ENCODE measurements at regions of chr6 and their contacts with region 1.

Region 1: DNA sequence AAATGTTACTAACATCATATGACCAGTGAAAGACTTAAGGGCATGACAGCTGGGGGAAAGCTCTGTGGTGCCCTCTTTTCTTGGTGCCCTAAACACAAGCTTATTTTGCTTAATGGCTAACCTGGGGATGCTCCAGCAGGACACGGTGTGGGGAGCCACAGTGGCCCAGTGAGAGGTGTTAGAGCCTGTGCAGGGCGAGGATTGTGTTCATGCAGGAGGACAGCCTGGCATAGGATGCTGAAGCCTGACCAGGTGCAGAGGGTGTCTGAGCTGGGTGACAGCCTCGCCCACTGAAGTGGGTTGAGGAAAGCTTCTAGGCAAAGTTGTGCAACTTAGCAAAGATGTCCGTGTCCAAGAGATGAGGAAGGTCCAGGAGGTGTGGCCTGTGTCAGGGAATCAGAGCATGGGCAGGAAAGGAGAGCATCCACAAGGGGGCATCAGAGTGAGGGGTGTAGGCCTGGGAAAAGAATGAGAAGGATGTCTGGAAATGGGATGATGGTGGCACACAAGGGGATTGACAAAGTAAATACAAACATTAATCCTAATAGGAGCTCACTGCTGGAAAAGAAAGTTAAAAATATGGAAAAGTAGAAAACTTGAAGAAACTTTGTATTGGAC is 33.9 kb downstream of the SLC17A4 start:
- DNase-seq: peak; percentile 39
- H3K4me3 ChIP-seq: no peak overlapping the region
- H3K27ac ChIP-seq: no peak overlapping the region
- H3K4me1 ChIP-seq: no peaks in the 10 kb centered on the region
- H3K27me3 ChIP-seq: no peaks in the 10 kb centered on the region
- CTCF ChIP-seq: peak; percentile 70 to 77

Region 2: GRCh38 chr6:25746968-25747367 is 41.4 kb before region 1 on chr6:
- CTCF ChIA-PET with region 1: no interaction called
- dilution Hi-C with region 1: no loop called
- in situ Hi-C with region 1: no loop called
- intact Hi-C with region 1: no loop called
- DNase-seq: no peak
- H3K4me3 ChIP-seq: no peak overlapping the region
- H3K27ac ChIP-seq: no peak overlapping the region
- H3K4me1 ChIP-seq: no peaks in the 10 kb centered on the region
- H3K27me3 ChIP-seq: no peaks in the 10 kb centered on the region
- CTCF ChIP-seq: no peak

Region 3: GRCh38 chr6:25757936-25758642 is 30.3 kb before region 1 on chr6:
- CTCF ChIA-PET with region 1: no interaction called
- dilution Hi-C with region 1: no loop called
- in situ Hi-C with region 1: no loop called
- intact Hi-C with region 1: no loop called
- DNase-seq: no peak
- H3K4me3 ChIP-seq: no peak overlapping the region
- H3K27ac ChIP-seq: no peak overlapping the region
- H3K4me1 ChIP-seq: no peaks in the 10 kb centered on the region
- H3K27me3 ChIP-seq: no peaks in the 10 kb centered on the region
- CTCF ChIP-seq: no peak

Region 4: GRCh38 chr6:25942561-25943147 is 154.2 kb after region 1 on chr6:
- CTCF ChIA-PET with region 1: no interaction called
- dilution Hi-C with region 1: no loop called
- in situ Hi-C with region 1: no loop called
- intact Hi-C with region 1: loop called (anchors 1 kb)
- DNase-seq: peak; percentile 35
- H3K4me3 ChIP-seq: no peak overlapping the region
- H3K27ac ChIP-seq: no peak overlapping the region
- H3K4me1 ChIP-seq: no peaks in the 10 kb centered on the region
- H3K27me3 ChIP-seq: no peaks in the 10 kb centered on the region
- CTCF ChIP-seq: peak; percentile 47 to 55

Region 5: DNA sequence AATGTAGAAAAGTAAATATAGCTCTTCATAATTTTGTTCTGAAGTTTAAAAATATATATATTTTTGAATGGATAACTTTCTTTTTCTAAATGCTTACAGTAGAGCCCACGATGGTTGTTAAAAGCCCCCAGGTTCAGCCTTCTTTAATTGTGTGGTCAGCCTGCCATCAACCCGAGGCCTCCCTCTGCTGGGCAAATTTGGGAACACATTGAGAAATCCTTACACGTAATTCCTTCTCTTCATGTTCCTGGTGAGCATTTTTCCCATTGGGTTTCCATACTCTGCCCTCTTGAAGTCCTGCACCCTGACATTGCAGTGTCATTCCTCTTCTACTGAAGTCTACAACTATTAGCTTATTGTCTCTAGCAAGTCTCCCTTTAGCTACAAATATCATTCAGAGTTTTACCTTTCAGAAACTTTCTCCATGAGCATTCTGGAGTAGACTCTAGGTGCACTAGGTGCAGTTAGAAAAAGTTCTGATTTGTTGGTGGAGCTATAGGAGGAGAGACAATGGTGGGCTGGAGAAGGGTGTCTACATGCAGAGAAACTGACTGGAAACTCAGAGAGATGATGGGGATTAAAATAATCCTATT is 214.8 kb after region 1 on chr6:
- CTCF ChIA-PET with region 1: interaction called, 3 read pairs
- dilution Hi-C with region 1: loop called (anchors 10 kb)
- in situ Hi-C with region 1: no loop called
- intact Hi-C with region 1: loop called (anchors 1 kb)
- DNase-seq: peak; percentile 33
- H3K4me3 ChIP-seq: no peak overlapping the region
- H3K27ac ChIP-seq: no peak overlapping the region
- H3K4me1 ChIP-seq: peaks cover 5% of the 10 kb centered on the region
- H3K27me3 ChIP-seq: no peaks in the 10 kb centered on the region
- CTCF ChIP-seq: peak; percentile 71 to 81

Region 6: DNA sequence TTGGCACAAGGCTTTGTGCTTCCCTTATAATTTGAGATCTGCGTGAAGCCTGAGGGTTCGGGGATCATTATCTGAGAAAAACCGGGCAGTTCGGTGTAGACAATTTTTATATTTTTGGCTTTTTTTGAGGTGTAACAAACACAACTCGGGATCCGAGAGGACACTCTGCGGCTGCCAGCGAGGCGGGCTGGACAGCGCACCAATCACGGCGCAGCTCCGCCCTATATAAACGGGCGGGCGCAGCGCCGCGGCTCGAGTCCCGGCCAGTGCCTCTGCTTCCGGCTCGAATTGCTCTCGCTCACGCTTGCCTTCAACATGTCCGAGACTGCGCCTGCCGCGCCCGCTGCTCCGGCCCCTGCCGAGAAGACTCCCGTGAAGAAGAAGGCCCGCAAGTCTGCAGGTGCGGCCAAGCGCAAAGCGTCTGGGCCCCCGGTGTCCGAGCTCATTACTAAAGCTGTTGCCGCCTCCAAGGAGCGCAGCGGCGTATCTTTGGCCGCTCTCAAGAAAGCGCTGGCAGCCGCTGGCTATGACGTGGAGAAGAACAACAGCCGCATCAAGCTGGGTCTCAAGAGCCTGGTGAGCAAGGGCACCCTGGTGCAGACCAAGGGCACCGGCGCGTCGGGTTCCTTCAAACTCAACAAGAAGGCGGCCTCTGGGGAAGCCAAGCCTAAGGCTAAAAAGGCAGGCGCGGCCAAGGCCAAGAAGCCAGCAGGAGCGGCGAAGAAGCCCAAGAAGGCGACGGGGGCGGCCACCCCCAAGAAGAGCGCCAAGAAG is 367.8 kb after region 1 on chr6:
- CTCF ChIA-PET with region 1: no interaction called
- dilution Hi-C with region 1: no loop called
- in situ Hi-C with region 1: no loop called
- intact Hi-C with region 1: no loop called
- DNase-seq: peak; percentile 94
- H3K4me3 ChIP-seq: peak overlapping the region; percentile 62 to 80 (median 74)
- H3K27ac ChIP-seq: peak overlapping the region; percentile 88
- H3K4me1 ChIP-seq: peaks cover 31% of the 10 kb centered on the region
- H3K27me3 ChIP-seq: no peaks in the 10 kb centered on the region
- CTCF ChIP-seq: peak in 1 of 2 donors; percentile 12

Measured in mammary epithelial cell (primary cell).